Activated CD4-positive, alpha-beta memory T cell treated with anti-CD3 and anti-CD28 coated beads for 36 hours (primary cell): ENCODE measurements at regions of chr14 and their contacts with region 1.

Region 1: DNA sequence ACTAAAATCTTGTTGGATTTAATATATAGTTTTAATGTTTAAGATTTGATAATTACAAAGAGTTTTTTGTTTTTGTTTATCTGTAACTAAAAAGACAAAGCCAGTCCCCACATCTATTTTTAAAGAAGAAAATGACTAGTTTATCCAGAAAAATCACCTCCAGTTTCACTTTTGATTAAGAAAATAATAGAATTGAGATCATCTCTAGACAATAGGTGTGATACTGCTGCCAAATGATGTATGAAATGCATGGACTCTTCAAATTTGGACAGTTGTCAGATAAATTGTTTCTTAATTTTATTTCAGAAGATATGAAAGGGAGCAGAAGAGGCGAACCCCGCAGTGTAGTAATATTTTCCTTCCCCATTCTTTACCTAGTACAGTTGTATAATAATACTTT is 20.0 kb downstream of the PCNX4 start:
- DNase-seq: no peak
- H3K4me3 Mint-ChIP-seq: no peak overlapping the region
- H3K27ac Mint-ChIP-seq: no peak overlapping the region
- H3K4me1 Mint-ChIP-seq: peaks cover 7% of the 10 kb centered on the region
- H3K27me3 Mint-ChIP-seq: no peaks in the 10 kb centered on the region

Region 2: DNA sequence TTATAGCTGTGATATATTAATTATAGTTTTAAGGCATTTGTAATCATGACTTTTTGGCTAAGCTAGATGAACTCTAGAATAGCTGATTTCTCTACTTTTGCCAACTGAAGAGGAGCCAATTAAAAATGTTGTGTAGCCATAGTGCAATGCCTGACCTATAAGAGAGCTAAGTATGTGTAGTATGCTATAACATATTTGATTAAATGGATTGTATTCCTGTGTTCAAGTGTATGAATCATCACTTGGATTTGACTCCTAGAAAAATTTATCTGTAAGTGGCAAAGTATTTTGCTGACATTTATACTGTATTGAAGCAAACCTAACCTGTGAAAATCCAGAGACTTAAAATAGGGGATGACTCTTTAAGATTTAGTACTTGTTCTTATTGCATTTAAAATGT is 14.2 kb after region 1 on chr14:
- CTCF ChIA-PET with region 1: no interaction called
- POLR2A ChIA-PET with region 1: no interaction called
- intact Hi-C with region 1: loop called (anchors 2 kb)
- DNase-seq: no peak
- H3K4me3 Mint-ChIP-seq: no peak overlapping the region
- H3K27ac Mint-ChIP-seq: no peak overlapping the region
- H3K4me1 Mint-ChIP-seq: no peaks in the 10 kb centered on the region
- H3K27me3 Mint-ChIP-seq: no peaks in the 10 kb centered on the region